ENCODE measurements at regions of chr20 and their contacts with region 1.

Region 1: GRCh38 chr20:3407771-3408637 is 535 bp upstream of the DNAAF9 start:
- DNase-seq: peak; percentile 53 to 74 (median 68)
- ATAC-seq: peak; percentile 80
- H3K4me3 ChIP-seq: peak overlapping the region; percentile 90
- H3K4me3 Mint-ChIP-seq: peak overlapping the region; percentile 94 to 100 (median 97)
- H3K27ac ChIP-seq: peak overlapping the region; percentile 70
- H3K27ac Mint-ChIP-seq: peak overlapping the region; percentile 83 to 97 (median 92)
- H3K4me1 ChIP-seq: no peaks in the 10 kb centered on the region
- H3K4me1 Mint-ChIP-seq: peaks cover 19 to 35% (median 29%) of the 10 kb centered on the region in 7 donors
- H3K27me3 ChIP-seq: no peaks in the 10 kb centered on the region
- H3K27me3 Mint-ChIP-seq: peaks cover 0 to 37% (median 0%) of the 10 kb centered on the region in 5 donors

Region 2: GRCh38 chr20:2101865-2102584 is 1306.0 kb before region 1 on chr20:
- CTCF ChIA-PET with region 1: no interaction called
- POLR2A ChIA-PET with region 1: no interaction called
- intact Hi-C with region 1: loop called in 1 of 2 experiments (anchors 5 kb)
- DNase-seq: peak; percentile 82 to 94 (median 92)
- ATAC-seq: peak; percentile 88
- H3K4me3 ChIP-seq: peak overlapping the region; percentile 88
- H3K4me3 Mint-ChIP-seq: peak overlapping the region; percentile 90 to 97 (median 96)
- H3K27ac ChIP-seq: peak overlapping the region; percentile 96
- H3K27ac Mint-ChIP-seq: peak overlapping the region; percentile 99 to 100 (median 100)
- H3K4me1 ChIP-seq: peaks cover 29 to 38% of the 10 kb centered on the region in 2 donors
- H3K4me1 Mint-ChIP-seq: peaks cover 36 to 58% (median 44%) of the 10 kb centered on the region in 7 donors
- H3K27me3 ChIP-seq: no peaks in the 10 kb centered on the region
- H3K27me3 Mint-ChIP-seq: peaks cover 0 to 4% (median 0%) of the 10 kb centered on the region in 5 donors

Region 3: GRCh38 chr20:2840138-2840966 is 567.7 kb before region 1 on chr20 and contains the starts of genes PCED1A and VPS16:
- CTCF ChIA-PET with region 1: no interaction called
- POLR2A ChIA-PET with region 1: no interaction called
- intact Hi-C with region 1: loop called in 1 of 2 experiments (anchors 2 kb)
- DNase-seq: peak; percentile 83 to 94 (median 90)
- ATAC-seq: peak; percentile 97
- H3K4me3 ChIP-seq: peak within 1 kb of the TSS; percentile 72
- H3K4me3 Mint-ChIP-seq: peak within 1 kb of the TSS; percentile 83 to 93 (median 90)
- H3K27ac ChIP-seq: peak within 1 kb of the TSS; percentile 77
- H3K27ac Mint-ChIP-seq: peak within 1 kb of the TSS; percentile 67 to 95 (median 92)
- H3K4me1 ChIP-seq: peaks cover 15 to 21% of the 10 kb centered on the region in 2 donors
- H3K4me1 Mint-ChIP-seq: peaks cover 18 to 48% (median 45%) of the 10 kb centered on the region in 7 donors
- H3K27me3 ChIP-seq: no peaks in the 10 kb centered on the region
- H3K27me3 Mint-ChIP-seq: no peaks in the 10 kb centered on the region
- total RNA-seq, gene PCED1A: 27.8 to 105 (median 72.5) TPM
- total RNA-seq, gene VPS16: 45.5 to 62.4 (median 56.1) TPM

Region 4: GRCh38 chr20:3204124-3204822 is 203.7 kb before region 1 on chr20 and contains the start of gene DDRGK1:
- CTCF ChIA-PET with region 1: no interaction called
- POLR2A ChIA-PET with region 1: no interaction called
- intact Hi-C with region 1: loop called (anchors 5 to 10 kb)
- DNase-seq: peak; percentile 79 to 95 (median 90)
- ATAC-seq: peak; percentile 96
- H3K4me3 ChIP-seq: peak within 1 kb of the TSS; percentile 99
- H3K4me3 Mint-ChIP-seq: peak within 1 kb of the TSS; percentile 91 to 97 (median 95)
- H3K27ac ChIP-seq: peak within 1 kb of the TSS; percentile 91
- H3K27ac Mint-ChIP-seq: peak within 1 kb of the TSS; percentile 91 to 98 (median 96)
- H3K4me1 ChIP-seq: peaks cover 12 to 18% of the 10 kb centered on the region in 2 donors
- H3K4me1 Mint-ChIP-seq: peaks cover 21 to 26% (median 22%) of the 10 kb centered on the region in 7 donors
- H3K27me3 ChIP-seq: no peaks in the 10 kb centered on the region
- H3K27me3 Mint-ChIP-seq: no peaks in the 10 kb centered on the region
- total RNA-seq, gene DDRGK1: 39.4 to 60.3 (median 46.6) TPM

Region 5: GRCh38 chr20:3420211-3420707 is 12.3 kb after region 1 on chr20:
- CTCF ChIA-PET with region 1: no interaction called
- POLR2A ChIA-PET with region 1: no interaction called
- intact Hi-C with region 1: loop called (anchors 1 kb)
- DNase-seq: peak in 3 of 9 donors; percentile 5 to 42 (median 9)
- ATAC-seq: peak; percentile 99
- H3K4me3 ChIP-seq: peak overlapping the region; percentile 9
- H3K4me3 Mint-ChIP-seq: peak overlapping the region in 2 of 10 donors; percentile 4 to 74
- H3K27ac ChIP-seq: no peak overlapping the region
- H3K27ac Mint-ChIP-seq: peak overlapping the region in 1 of 9 donors; percentile 83
- H3K4me1 ChIP-seq: peaks cover 0 to 9% of the 10 kb centered on the region in 2 donors
- H3K4me1 Mint-ChIP-seq: peaks cover 0 to 12% (median 6%) of the 10 kb centered on the region in 7 donors
- H3K27me3 ChIP-seq: no peaks in the 10 kb centered on the region
- H3K27me3 Mint-ChIP-seq: peaks cover 0 to 16% (median 6%) of the 10 kb centered on the region in 5 donors

Region 6: GRCh38 chr20:3479759-3480615 is 72.0 kb after region 1 on chr20:
- CTCF ChIA-PET with region 1: no interaction called
- POLR2A ChIA-PET with region 1: no interaction called
- intact Hi-C with region 1: no loop called
- DNase-seq: no peak
- ATAC-seq: no peak
- H3K4me3 ChIP-seq: no peak overlapping the region
- H3K4me3 Mint-ChIP-seq: no peak overlapping the region
- H3K27ac ChIP-seq: no peak overlapping the region
- H3K27ac Mint-ChIP-seq: no peak overlapping the region
- H3K4me1 ChIP-seq: no peaks in the 10 kb centered on the region
- H3K4me1 Mint-ChIP-seq: peaks cover 0 to 48% (median 31%) of the 10 kb centered on the region in 7 donors
- H3K27me3 ChIP-seq: no peaks in the 10 kb centered on the region
- H3K27me3 Mint-ChIP-seq: no peaks in the 10 kb centered on the region

Region 7: DNA sequence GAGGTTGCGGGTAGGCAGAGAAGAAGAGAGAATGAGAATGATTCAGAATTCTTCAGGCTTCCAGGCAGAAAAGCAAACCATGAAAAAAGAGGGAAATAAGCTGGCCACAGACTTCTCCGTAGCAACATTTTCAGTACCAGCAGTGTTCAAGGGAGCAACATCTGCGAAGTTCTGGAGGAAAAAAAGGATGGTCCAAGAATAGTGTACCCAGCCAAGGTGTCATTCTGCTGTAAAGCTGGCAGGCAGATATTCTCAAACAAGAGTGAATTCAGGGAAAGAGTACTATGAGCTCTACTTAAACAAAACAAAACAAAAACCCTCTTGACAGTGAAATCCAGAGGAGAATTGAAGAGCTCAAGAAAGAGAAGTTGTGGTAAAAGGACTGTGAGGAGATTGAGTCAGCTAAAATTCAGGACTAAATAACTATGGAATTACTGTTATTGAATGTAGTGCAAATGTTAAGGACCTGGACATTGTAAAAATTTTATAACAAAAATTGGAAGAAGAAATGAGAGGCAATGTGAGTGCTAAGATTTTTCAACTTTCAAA is 149.3 kb after region 1 on chr20:
- CTCF ChIA-PET with region 1: no interaction called
- POLR2A ChIA-PET with region 1: no interaction called
- intact Hi-C with region 1: no loop called
- DNase-seq: no peak
- ATAC-seq: no peak
- H3K4me3 ChIP-seq: no peak overlapping the region
- H3K4me3 Mint-ChIP-seq: no peak overlapping the region
- H3K27ac ChIP-seq: no peak overlapping the region
- H3K27ac Mint-ChIP-seq: peak overlapping the region in 1 of 9 donors; percentile 57
- H3K4me1 ChIP-seq: no peaks in the 10 kb centered on the region
- H3K4me1 Mint-ChIP-seq: peaks cover 0 to 4% (median 0%) of the 10 kb centered on the region in 7 donors
- H3K27me3 ChIP-seq: no peaks in the 10 kb centered on the region
- H3K27me3 Mint-ChIP-seq: no peaks in the 10 kb centered on the region